AG04449 (cell line): ENCODE measurements at regions of chr3 and their contacts with region 1.

Region 1: DNA sequence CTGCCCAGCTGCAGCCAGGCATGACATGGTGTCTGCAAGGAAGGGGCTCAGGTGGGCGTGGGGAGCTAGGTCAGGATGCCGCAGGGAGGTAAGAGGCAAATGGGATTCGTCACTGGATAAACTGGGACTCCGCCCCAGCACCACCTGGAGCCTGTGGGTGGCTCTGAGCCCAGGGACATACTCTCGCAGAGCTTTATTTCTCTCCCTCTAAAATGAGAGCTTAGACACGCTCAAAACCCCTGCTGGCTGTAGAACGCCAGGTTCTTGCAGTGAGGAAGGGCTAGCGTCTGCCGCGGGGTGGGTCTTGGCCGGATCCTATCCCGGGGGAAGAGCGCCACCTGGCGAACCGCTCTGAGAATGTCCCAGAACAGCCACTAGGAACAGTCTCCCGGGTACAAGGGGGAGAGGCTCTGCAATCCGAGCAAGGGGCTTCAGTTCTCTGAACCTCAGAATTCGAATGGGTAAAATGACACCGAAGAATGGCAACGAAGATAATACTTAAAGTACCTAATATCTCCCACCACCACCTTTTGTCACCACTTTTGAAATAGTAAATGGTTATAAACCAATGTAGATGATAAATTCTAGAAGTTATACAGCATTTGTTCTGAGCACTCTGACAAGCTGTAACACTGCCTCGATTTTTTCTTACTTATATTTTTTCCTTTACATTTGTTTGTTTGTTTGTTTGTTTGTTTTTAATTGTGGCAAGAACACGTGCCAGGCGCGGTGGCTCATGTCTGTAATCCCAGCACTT is 53.2 kb upstream of the SRGAP3 start:
- DNase-seq: no peak
- H3K4me3 ChIP-seq: peak overlapping the region; percentile 38
- CTCF ChIP-seq: peak; percentile 86

Region 2: GRCh38 chr3:8663177-8664061 is 639.2 kb before region 1 on chr3:
- CTCF ChIA-PET with region 1: interaction called, 16 read pairs
- POLR2A ChIA-PET with region 1: no interaction called
- DNase-seq: no peak
- H3K4me3 ChIP-seq: no peak overlapping the region
- CTCF ChIP-seq: peak; percentile 62

Region 3: DNA sequence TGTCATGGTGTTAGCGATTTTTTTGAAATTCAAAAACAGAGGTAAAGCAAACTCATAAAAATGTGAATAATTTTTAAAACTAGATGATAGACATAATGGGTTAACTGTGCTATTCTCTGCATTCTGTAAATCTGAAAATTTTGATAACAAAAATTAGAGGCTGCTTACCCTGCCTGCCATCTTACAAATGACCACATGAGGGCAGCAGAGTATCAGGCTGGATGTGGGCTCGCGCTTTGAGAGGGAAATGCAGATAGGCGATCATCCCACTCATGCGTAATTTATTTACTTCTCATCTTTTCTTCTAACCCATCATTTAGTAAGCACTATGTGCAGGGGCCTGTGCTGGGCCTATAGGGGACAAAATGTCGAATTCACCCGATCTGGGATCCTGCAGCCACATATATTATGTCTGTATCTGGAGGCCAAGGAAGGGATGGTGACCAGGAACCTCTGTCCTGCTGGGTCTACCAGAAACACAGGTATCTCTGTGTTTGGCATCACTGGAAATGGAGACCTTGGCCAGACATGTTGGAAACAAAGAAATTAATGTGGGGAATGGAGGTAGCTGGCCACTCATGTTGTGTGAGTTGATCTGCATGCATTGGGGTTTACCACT is 331.5 kb before region 1 on chr3:
- CTCF ChIA-PET with region 1: interaction called, 262 read pairs
- POLR2A ChIA-PET with region 1: no interaction called
- DNase-seq: no peak
- H3K4me3 ChIP-seq: no peak overlapping the region
- CTCF ChIP-seq: peak; percentile 79

Region 4: GRCh38 chr3:8987645-8988383 is 314.8 kb before region 1 on chr3:
- CTCF ChIA-PET with region 1: interaction called, 107 read pairs
- POLR2A ChIA-PET with region 1: no interaction called
- DNase-seq: no peak
- H3K4me3 ChIP-seq: no peak overlapping the region
- CTCF ChIP-seq: peak; percentile 87

Region 5: DNA sequence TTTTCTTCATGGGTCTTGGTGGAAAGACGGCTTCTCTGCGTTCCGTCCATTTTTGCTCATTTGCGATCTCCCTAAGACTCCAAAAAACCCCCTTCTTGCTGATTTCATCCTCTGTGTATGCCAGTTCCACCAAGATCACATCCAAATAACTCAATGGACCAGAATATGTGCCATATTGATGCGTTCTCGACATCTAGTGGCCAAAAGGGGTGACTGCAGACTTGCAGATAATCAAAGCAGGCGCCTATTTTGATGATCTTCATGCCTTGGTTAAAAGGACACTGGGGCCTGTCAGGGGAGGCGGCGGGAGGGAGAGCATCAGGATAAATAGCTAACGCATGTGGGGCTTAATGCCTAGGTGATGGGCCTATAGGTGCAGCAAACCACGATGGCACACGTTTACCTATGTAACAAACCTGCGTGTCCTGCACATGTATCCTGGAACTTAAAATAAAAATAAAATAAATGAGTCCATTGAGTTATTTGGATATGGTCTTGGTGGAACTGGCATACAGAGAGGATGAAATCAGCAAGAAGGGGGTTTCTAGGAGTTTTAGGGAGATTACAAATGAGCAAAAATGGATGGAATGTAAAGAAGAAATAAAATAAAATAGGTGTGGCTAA is 235.1 kb before region 1 on chr3:
- CTCF ChIA-PET with region 1: interaction called, 19 read pairs
- POLR2A ChIA-PET with region 1: no interaction called
- DNase-seq: peak; percentile 23
- H3K4me3 ChIP-seq: no peak overlapping the region
- CTCF ChIP-seq: peak; percentile 85

Region 6: DNA sequence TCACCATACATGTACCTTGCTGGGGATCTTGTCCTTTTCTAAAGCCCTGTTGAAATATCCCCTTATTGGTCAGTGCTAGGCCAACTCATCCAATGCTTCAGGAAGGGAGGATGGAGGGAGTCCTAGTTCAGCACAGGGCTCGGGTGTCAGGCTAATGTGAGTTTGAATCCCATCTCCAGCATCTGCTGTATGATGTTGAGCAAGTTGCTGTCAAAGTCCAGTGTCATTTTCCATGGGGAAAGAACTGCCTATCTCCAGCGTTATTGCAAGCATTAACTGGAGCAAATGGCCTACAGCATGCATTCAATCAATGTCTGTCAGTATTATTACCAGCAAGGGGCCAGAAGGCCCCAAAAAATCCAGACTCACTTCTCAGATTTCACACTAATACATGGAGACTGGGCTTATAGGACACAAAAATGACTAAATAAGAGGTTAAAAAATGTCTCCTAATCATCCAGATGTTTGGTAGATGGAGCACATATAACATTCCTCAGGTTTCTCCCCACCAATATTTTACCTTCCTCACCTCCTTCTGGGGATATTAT is 93.9 kb before region 1 on chr3:
- CTCF ChIA-PET with region 1: no interaction called
- POLR2A ChIA-PET with region 1: no interaction called
- DNase-seq: no peak
- H3K4me3 ChIP-seq: no peak overlapping the region
- CTCF ChIP-seq: no peak

Region 7: GRCh38 chr3:9280451-9281219 is 22.0 kb before region 1 on chr3:
- CTCF ChIA-PET with region 1: interaction called, 10 read pairs
- POLR2A ChIA-PET with region 1: no interaction called
- DNase-seq: no peak
- H3K4me3 ChIP-seq: no peak overlapping the region
- CTCF ChIP-seq: no peak

Region 8: DNA sequence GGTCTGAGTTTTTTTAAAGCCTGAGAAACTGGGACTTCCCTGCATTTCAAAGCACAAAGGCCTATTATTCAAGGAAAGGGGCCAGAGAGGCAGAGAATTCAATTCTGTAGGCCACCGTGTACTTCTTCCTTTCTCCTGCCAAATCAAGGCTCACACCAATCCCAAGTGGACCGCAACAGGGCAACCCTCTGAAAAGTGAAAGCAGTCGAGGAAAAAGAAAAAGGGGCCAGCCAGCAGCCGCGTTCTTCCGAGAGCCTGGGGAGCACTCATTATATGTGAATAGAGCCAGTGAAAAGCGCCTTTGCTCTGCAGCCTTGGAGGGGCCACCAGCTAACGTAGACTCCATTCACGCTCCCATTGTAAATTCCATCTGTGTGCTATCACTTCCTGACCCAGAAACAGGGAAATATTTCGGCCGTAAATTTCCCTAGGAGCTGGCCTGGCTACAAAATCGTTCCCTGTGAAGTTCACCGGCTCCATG is 14.3 kb after region 1 on chr3:
- CTCF ChIA-PET with region 1: interaction called, 87 read pairs
- POLR2A ChIA-PET with region 1: no interaction called
- DNase-seq: no peak
- H3K4me3 ChIP-seq: peak overlapping the region; percentile 43
- CTCF ChIP-seq: no peak

Region 9: DNA sequence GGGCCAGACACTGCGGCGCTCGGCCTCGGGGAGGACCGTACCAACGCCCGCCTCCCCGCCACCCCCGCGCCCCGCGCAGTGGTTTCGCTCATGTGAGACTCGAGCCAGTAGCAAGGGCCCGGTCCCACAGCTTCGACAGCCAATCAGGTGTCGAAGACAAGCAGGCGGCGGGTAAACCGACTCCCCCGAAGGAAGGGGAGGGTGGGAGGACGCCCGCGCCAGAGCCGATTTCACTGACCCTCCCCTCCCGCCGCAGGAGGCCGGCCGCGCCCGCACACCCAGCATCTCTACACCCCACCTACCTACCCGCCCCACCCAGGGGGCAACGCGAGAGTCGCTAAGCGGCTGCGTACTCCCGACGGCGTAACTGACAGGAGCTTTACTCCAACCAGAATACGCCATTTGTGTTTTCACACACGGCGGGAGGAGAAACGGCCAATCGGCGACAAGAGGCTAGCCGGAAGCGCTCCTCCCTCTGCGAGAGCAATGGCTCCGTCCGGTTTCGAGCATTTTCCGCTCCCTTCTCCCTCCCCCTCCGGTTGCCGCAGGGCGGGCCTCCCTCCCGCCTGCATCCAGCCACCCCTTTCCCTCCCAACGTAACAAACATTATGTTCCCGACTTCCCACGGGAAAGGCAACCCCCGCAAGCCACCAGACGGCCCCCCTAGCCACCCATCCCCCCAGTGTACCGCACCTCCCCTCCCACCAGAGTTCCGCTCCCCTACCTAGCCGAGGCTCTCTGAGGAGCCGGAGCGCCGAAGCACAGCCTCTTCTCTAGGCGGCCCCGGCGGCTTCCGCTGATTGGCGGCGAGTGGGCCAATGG is 94.3 kb after region 1 on chr3:
- CTCF ChIA-PET with region 1: no interaction called
- POLR2A ChIA-PET with region 1: no interaction called
- DNase-seq: peak; percentile 99
- H3K4me3 ChIP-seq: peak overlapping the region; percentile 75
- CTCF ChIP-seq: no peak

Region 10: DNA sequence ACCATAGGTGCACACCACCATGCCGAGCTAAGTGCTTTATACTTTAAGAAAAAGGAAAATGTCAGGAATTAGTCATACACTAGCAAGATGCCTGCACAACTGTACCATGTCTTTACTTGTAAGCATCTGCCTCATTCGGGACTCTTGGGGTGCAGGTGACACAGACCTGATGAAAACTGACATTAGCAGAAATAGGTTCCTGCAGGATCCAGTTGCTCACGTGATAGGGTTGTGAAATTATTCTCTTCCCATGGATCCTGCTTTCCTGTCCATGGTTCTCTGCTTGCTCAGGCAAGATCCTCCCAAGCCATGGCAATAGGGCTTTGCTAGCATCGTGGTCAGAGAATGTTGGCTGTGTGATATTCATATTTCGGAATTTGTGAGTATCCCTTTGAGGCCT is 261.2 kb after region 1 on chr3:
- CTCF ChIA-PET with region 1: no interaction called
- POLR2A ChIA-PET with region 1: no interaction called
- DNase-seq: no peak
- H3K4me3 ChIP-seq: no peak overlapping the region
- CTCF ChIP-seq: no peak

Region 11: GRCh38 chr3:9749645-9750555 is 447.3 kb after region 1 on chr3 and contains the start of gene OGG1:
- CTCF ChIA-PET with region 1: no interaction called
- POLR2A ChIA-PET with region 1: no interaction called
- DNase-seq: peak; percentile 84
- H3K4me3 ChIP-seq: peak within 1 kb of the TSS; percentile 92
- CTCF ChIP-seq: no peak